Head of caudate nucleus (tissue), 42 donors: ENCODE measurements at regions of chrX and their contacts with region 1.

Region 1: DNA sequence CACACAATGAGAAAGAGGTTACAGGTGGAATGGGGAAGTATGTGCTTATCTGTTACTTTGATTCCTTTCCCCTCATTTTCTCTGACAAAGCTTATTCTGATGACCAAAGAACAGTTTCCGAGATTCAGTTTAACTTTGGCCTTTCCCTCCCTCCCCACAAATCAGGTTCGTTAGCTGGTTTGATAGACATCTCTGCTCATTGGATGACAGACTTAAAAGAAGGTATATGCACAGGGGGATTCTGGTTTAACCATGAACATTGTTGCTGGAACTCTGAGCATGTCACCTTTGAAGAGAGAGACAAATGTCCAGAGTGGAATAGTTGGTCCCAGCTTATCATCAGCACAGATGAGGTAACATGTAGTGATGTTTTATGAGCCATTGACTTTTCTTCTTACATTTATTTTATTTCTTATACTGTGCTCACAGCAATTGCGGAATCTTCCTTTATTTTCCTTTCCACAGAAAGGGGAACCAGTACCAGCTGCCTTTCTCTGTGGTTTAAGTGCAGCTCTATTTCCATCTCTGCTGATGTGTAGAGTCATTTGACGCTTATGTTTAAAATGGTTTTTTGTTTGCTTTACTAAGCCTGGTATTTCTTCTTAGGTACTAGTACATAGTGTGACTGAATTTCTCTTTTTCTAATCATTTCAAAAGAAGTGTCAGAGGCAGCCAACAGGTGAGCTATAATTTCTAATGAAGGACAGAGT is 125.0 kb downstream of the AKAP4 start:
- DNase-seq: no peak

Region 2: DNA sequence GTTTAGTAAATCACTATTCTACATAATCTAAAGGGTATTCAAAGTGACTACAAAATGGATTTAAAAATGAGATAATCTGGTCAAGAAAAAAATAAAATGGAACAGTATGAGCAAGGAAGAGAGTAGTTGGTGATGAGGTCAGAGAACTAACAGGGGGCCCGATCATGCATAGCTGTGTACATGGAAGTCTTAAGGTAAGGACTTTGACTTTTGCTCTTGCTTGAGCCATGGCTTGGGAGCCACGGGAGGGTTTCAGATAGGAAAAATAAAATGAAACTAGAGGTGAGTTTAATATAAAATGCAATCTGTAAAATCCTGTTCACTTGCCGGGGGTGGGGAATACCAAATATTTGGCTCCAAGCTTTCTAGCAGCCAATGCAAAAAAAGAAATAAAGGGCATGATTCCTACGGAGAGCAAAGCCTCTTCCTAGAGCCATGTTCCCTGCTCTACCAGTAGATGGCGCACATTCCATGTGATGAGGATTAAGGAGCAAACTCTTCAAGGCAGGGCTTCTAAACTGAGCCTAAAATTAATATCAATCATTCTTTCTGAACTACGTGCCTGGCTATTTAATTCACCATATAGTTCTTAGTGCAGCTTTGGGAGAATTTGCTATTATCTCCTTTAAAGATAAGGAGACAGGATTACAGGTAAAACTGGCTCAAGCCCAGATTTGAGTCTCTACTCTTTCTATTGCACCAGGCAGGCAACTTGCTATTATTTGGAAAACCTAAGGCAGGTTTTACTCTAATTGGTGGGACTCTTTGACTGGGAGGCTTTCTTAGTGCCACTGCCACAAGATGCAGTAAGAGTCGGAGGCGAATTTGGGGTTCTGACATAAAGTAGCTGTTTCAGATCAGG is 160.2 kb before region 1 on chrX:
- intact Hi-C with region 1: loop called (anchors 10 kb)
- DNase-seq: peak in 37 of 42 donors; percentile 7 to 78 (median 45)

Region 3: GRCh38 chrX:49988143-49988542 is 87.6 kb before region 1 on chrX:
- intact Hi-C with region 1: no loop called
- DNase-seq: no peak

Region 4: GRCh38 chrX:50117476-50117875 is 41.7 kb after region 1 on chrX:
- intact Hi-C with region 1: no loop called
- DNase-seq: peak in 2 of 42 donors; percentile 10 to 12

Region 5: DNA sequence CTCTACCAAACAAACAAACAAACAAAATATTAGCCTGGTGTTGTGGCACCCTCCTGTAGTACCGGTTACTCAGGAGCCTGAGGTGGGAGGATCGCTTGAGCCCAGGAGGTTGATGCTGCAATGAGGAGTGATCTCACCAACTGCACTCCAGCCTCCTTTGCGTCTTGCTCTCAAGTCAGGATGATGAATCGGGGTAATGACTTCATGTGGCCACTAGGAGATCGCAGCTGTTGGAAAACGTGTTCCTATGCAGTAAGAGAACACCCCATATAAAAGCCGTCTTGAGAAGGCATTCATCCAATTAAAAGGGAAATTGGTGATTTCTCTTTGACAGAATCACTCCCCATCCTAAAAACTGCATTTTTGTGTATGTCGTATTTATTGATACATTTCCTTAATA is 135.7 kb after region 1 on chrX:
- intact Hi-C with region 1: no loop called
- DNase-seq: no peak